PC-3 (cell line): ENCODE measurements at regions of chr12 and their contacts with region 1.

Region 1: DNA sequence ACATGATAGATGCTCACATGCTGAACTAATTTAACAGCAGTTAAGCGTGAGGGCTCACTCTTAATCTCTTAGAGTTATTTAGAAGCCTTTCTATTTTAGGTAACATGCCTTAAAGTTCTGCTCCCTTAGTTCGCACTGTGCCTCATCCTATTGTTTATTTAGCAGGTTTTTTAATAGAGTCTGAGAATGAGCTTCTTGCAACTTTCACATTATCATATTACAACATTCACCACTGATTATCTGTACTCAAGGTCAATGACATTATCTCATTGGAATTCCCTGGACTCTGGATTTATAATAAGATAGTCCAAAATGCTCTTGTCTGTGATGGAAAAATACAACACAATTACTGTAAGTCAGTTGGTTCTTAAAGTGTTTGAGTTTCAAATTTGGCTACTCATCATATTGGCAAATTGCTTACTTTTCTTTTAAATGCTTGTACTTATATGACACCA is 183.6 kb upstream of the SLC38A2 start:
- DNase-seq: peak; percentile 93
- ATAC-seq: peak; percentile 76
- H3K4me3 ChIP-seq: peak overlapping the region; percentile 41
- H3K27ac ChIP-seq: peak overlapping the region; percentile 96
- H3K4me1 ChIP-seq: peaks cover 87% of the 10 kb centered on the region
- H3K27me3 ChIP-seq: no peaks in the 10 kb centered on the region
- CTCF ChIP-seq: no peak

Region 2: DNA sequence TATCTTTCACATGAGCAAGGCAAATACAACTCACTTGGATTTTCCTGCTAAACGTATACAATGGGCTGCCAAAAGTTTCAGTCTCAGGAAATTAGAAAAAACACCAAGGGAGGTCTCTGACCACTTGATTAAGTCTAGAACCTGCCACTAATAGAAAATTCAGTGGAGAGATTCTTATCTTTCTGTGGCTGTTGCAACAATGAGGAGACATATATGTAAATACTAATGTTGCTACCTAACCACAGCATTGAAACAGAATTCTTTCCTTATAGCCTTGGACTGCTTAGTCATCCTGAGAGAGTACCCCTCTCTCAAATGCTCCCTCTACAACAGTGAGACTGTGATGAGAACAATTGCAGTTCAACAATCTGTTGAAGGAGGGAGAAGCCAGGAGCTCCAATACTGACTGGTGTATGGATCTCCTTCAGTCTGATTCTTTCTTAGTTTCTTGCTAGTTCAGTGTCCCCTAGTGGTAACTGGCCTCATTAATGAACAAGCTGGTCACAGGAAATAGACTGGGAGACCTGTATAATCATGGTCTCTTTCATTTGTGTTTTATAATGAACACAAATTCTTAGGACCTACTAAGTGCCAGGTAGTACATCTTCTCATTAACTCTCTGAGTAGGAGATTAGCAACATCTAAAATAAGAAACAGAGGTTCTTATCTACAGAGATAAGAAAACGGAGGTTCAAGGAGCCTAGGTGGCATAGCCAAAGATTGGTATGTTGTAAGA is 105.1 kb after region 1 on chr12:
- CTCF ChIA-PET with region 1: interaction called, 4 read pairs
- POLR2A ChIA-PET with region 1: no interaction called
- intact Hi-C with region 1: loop called (anchors 2 kb)
- DNase-seq: peak; percentile 80
- ATAC-seq: peak; percentile 53
- H3K4me3 ChIP-seq: no peak overlapping the region
- H3K27ac ChIP-seq: peak overlapping the region; percentile 56
- H3K4me1 ChIP-seq: peaks cover 57% of the 10 kb centered on the region
- H3K27me3 ChIP-seq: no peaks in the 10 kb centered on the region
- CTCF ChIP-seq: peak; percentile 87